Posterior cingulate gyrus (tissue), 11 donors: ENCODE measurements at regions of chr5 and their contacts with region 1.

Region 1: DNA sequence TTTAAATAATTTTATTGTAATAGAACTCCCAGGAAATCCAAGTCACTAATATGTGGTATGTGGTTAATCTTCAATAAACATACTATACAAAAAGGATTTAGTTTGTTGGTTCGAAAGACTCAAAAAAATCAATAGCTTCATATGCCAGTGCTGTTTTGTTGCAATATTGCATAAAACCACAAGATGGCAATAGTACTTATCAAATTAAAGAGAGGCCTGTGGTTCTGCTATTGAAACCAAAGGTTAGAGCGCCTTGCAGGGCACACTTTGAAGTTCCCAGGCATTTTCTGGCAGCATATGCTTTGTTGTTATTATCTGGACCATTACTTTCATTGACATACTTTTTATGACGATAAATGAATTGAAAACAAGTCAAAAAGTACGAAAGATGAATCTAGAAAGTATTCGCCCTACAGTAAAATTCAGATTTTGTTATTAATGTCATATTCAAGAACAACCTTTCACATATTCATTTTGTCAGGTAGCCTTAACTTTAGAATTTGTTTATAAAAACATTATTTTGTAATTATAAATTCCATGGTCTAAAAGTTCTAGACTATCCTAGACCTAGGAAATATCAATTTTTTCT is 316.3 kb downstream of the MCTP1 start:
- DNase-seq: peak in 1 of 10 donors; percentile 69

Region 2: DNA sequence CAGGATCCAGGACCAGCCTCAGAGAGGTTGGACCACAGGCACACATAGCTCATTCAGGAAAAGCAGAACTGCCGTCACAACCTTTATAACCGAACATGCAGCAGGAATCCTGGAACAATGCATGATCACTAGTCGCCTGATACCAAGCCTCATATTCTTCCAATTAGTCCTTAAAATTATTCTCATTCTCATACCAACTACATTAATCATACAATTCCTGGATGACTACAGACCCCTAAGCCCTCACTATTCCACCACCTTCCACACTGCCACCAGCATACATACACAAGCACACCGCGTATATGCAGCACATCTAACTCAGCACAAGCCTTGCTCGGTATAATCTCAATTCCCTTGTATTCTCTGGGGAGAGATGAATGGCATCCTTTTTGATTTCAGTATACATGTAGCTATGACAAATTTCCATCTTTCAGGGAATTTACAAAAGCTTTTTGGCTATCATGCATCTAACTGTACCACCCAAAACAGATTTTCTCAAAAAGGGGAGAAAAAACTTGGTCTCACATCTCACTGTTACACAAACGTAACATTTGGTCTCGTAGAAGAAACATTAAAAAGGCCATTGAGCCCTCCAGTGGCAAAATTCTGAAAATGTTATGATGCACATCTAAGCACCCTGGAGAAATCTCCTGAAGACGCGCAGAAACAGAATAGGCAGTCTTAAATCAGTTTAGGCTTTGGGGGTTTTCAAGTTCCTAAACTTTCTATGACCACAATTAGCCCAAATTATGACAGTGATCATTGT is 270.1 kb after region 1 on chr5:
- intact Hi-C with region 1: loop called (anchors 2 kb)
- DNase-seq: no peak

Region 3: GRCh38 chr5:95261437-95262175 is 293.0 kb after region 1 on chr5:
- intact Hi-C with region 1: loop called (anchors 5 kb)
- DNase-seq: no peak